IMR-90 (cell line): ENCODE measurements at regions of chr4 and their contacts with region 1.

Region 1: DNA sequence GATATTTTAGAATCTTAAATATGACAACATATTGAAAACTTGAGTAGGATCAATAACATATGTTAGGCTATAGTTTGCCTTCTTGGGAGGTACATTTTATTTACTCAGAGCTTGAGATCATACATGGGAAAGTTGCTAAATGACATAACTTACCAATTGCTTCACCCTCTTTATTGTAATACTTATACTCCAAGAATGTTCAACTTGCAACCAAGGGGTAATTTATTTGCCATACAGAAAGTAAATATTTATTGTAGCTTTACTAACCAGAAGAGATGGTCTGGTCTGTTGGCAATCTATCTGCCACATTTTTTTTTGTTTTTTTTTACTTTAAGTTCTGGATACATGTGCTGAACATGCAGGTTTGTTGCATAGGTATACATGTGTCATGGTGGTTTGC is 426.6 kb downstream of the ARHGAP24 start:
- DNase-seq: peak; percentile 43
- ATAC-seq: peak; percentile 46
- H3K4me3 ChIP-seq: no peak overlapping the region
- H3K27ac ChIP-seq: no peak overlapping the region
- H3K4me1 ChIP-seq: no peaks in the 10 kb centered on the region
- H3K27me3 ChIP-seq: no peaks in the 10 kb centered on the region
- CTCF ChIP-seq: no peak
- POLR2A ChIP-seq: no peak
- RAD21 ChIP-seq: no peak

Region 2: GRCh38 chr4:84691170-84691691 is 1210.3 kb before region 1 on chr4:
- CTCF ChIA-PET with region 1: no interaction called
- POLR2A ChIA-PET with region 1: no interaction called
- dilution Hi-C with region 1: no loop called
- in situ Hi-C with region 1: no loop called
- intact Hi-C with region 1: loop called (anchors 10 kb)
- DNase-seq: peak; percentile 94
- ATAC-seq: peak; percentile 88
- H3K4me3 ChIP-seq: no peak overlapping the region; the same call in 1 of the 2 replicates
- H3K27ac ChIP-seq: 0 out of 2 replicates have a peak overlapping the region, but pooled peaks have one; percentile 6
- H3K4me1 ChIP-seq: peaks cover 14% of the 10 kb centered on the region
- H3K27me3 ChIP-seq: no peaks in the 10 kb centered on the region
- CTCF ChIP-seq: no peak
- POLR2A ChIP-seq: no peak
- RAD21 ChIP-seq: no peak